ENCODE measurements at regions of chr6 and their contacts with region 1.

Region 1: GRCh38 chr6:165049364-165049763 is 260.0 kb downstream of the C6orf118 start:
- DNase-seq: no peak
- ATAC-seq: no peak
- H3K4me3 ChIP-seq: no peak overlapping the region
- H3K27ac ChIP-seq: no peak overlapping the region
- H3K4me1 ChIP-seq: no peaks in the 10 kb centered on the region
- H3K27me3 ChIP-seq: no peaks in the 10 kb centered on the region
- CTCF ChIP-seq: no peak; the same call in 1 of the 2 replicates
- POLR2A ChIP-seq: no peak
- RAD21 ChIP-seq: no peak

Region 2: DNA sequence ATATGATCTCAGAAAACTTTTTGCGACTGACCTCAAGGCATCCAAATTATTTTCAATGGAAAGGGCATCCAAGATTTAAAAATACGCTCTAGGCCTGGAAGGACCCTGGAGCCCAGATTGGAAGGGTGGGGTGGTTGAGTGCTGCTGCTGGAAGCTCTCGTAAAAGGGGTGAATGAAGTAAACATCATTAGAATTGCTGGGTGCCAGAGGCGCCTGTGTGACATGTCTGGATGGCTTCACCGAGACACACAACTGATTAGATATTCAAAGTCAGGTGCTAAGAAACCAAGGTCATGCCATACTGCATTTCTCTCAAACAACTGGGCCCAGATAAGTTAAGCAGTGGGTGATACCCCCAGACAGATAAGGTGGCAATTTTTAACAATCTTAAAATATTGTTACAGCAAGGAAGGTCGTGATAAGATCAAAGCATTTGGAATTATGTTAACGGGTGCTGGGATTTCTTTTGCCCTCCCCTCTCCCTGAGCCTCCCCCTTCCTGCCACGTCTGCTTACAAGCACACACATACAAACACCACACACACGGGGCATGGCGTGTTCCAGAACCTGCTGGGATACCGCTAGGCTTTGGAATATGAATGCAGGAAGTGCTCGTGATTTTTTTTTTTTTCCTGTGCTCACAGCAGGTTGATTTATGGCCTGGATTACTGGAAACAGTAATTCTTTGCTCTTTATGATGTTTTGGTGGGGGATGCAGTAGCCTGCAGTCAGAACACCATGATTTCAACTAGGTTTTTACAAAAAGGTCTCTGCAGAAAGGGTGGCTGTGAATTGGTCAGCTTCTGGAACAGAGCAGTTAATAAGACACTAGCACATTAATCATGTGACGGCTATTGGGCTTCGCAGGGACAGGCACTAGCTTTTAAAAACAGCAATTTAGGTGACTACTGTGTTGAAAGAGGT is 1083.7 kb before region 1 on chr6:
- CTCF ChIA-PET with region 1: no interaction called
- POLR2A ChIA-PET with region 1: no interaction called
- dilution Hi-C with region 1: no loop called
- in situ Hi-C with region 1: no loop called
- intact Hi-C with region 1: loop called (anchors 10 kb)
- DNase-seq: no peak
- ATAC-seq: no peak
- H3K4me3 ChIP-seq: no peak overlapping the region
- H3K27ac ChIP-seq: no peak overlapping the region
- H3K4me1 ChIP-seq: 0 out of 2 replicates have a peak, but pooled peaks cover 1% of the 10 kb centered on the region
- H3K27me3 ChIP-seq: no peaks in the 10 kb centered on the region
- CTCF ChIP-seq: no peak
- POLR2A ChIP-seq: no peak
- RAD21 ChIP-seq: no peak

Region 3: DNA sequence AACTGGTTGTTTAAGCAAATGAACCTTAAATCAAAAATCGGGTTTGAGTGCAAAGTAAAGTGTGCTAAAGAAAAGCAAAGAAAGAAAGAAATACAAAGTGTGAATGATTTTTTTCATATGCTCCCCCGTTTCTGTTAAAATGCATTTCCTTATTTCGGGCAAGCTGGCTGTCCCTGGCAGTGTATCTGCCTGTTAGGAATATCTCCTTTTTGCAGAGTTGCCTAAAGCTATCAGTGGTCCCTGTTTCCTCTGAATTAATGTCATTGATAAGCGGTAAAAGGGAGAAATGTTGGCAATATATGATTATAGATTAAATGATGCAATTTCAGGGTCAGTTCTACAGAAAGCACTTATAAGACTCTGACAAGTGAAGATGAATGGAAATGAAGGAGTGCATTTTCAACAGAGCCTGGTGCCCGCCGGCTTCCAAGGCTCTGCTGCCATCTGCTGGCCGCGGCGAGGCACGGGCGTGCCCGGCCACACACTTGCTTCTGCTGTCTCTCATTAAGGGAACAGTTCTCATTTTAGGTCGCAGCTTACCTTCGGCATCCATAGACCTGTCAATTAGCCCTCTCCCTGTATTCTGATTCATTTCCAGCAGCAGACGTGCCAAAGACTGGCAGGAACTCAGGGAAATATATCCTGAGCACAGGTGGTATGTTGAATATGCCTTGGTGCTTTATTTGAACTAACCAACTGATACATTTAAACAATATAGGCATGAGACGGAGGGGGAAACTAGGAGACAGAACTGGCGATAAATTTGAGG is 121.9 kb before region 1 on chr6:
- CTCF ChIA-PET with region 1: no interaction called
- POLR2A ChIA-PET with region 1: no interaction called
- dilution Hi-C with region 1: no loop called
- in situ Hi-C with region 1: no loop called
- intact Hi-C with region 1: loop called (anchors 1 kb)
- DNase-seq: peak; percentile 27
- ATAC-seq: peak; percentile 96
- H3K4me3 ChIP-seq: no peak overlapping the region
- H3K27ac ChIP-seq: no peak overlapping the region
- H3K4me1 ChIP-seq: no peaks in the 10 kb centered on the region
- H3K27me3 ChIP-seq: no peaks in the 10 kb centered on the region
- CTCF ChIP-seq: peak; percentile 81
- POLR2A ChIP-seq: no peak
- RAD21 ChIP-seq: peak; percentile 85

Region 4: DNA sequence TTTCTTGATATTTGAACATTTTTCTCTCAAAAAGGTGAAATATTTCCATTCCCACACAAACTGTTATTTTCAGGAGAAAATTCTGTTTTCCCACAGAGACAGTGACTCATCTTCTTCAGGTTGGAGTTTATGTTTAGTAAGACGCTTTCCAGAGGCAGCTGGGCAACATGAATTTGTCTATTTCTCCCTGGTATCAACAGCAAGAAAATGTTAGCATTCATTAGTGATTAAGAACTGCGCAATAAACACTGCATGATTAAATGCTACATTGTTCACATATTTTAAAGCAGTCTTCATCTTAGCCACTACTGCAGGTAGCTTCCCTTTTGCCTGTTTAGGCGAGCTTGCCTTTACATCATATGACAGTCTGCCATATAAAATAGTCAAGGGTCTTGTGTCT is 35.7 kb before region 1 on chr6:
- CTCF ChIA-PET with region 1: no interaction called
- POLR2A ChIA-PET with region 1: no interaction called
- dilution Hi-C with region 1: no loop called
- in situ Hi-C with region 1: no loop called
- intact Hi-C with region 1: no loop called
- DNase-seq: no peak
- ATAC-seq: peak; percentile 31; the same call in 1 of the 2 replicates
- H3K4me3 ChIP-seq: no peak overlapping the region
- H3K27ac ChIP-seq: no peak overlapping the region
- H3K4me1 ChIP-seq: no peaks in the 10 kb centered on the region
- H3K27me3 ChIP-seq: no peaks in the 10 kb centered on the region
- CTCF ChIP-seq: no peak
- POLR2A ChIP-seq: no peak
- RAD21 ChIP-seq: no peak